Gastrocnemius medialis (tissue), 4 donors: ENCODE measurements at regions of chr14 and their contacts with region 1.

Region 1: GRCh38 chr14:73553845-73554244 is 4.9 kb downstream of the HEATR4 start:
- DNase-seq: no peak
- ATAC-seq: no peak
- H3K4me3 ChIP-seq: no peak overlapping the region
- H3K27ac ChIP-seq: no peak overlapping the region
- H3K4me1 ChIP-seq: no peaks in the 10 kb centered on the region
- H3K27me3 ChIP-seq: no peaks in the 10 kb centered on the region
- CTCF ChIP-seq: no peak
- POLR2A ChIP-seq: no peak

Region 2: DNA sequence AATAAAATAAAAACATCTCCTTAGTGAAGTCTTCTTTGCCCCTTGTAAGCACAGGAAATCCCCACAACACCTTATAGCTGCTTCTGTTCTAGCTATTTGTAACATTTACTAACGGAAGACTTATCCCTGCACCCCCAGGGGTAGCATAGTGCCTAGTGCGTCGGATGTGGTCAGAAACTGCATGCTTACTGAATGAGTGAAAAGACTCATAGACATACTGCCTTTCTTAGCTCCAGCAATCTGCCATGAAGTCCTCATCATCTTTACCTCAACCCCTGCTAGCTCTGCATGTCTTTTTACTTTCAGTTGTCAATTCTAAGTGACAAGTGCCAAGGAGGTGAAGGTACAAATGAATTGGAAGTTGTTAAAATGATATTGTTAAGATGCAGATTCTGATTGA is 50.2 kb before region 1 on chr14:
- in situ Hi-C with region 1: no loop called
- intact Hi-C with region 1: no loop called
- DNase-seq: no peak
- ATAC-seq: no peak
- H3K4me3 ChIP-seq: no peak overlapping the region
- H3K27ac ChIP-seq: no peak overlapping the region
- H3K4me1 ChIP-seq: no peaks in the 10 kb centered on the region
- H3K27me3 ChIP-seq: no peaks in the 10 kb centered on the region
- CTCF ChIP-seq: no peak
- POLR2A ChIP-seq: no peak

Region 3: DNA sequence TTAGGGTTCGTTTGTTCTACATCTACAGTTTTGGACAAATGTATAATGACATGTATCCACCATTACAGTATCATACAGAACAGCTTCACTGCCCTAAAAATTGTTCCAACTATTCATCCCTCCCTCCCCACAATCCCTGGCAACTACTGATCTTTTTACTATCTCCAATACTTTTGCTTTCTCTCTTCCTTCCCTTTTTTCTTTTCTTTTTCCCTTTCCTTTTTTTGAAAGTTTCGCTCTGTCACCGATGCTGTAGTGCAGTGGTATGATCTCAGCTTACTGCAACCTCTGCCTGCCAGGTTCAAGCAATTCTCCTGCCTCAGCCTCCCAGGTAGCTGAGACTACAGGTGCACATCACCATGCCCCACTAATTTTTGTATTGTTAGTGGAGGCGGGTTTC is 35.3 kb after region 1 on chr14:
- in situ Hi-C with region 1: loop called in 1 of 4 experiments (anchors 5 kb)
- intact Hi-C with region 1: no loop called
- DNase-seq: no peak
- ATAC-seq: no peak
- H3K4me3 ChIP-seq: no peak overlapping the region
- H3K27ac ChIP-seq: no peak overlapping the region
- H3K4me1 ChIP-seq: no peaks in the 10 kb centered on the region
- H3K27me3 ChIP-seq: no peaks in the 10 kb centered on the region
- CTCF ChIP-seq: no peak
- POLR2A ChIP-seq: no peak